ENCODE measurements at regions of chr6 and their contacts with region 1.

Region 1: GRCh38 chr6:16332175-16332542 is 93.8 kb downstream of the GMPR start:
- DNase-seq: peak; percentile 81
- H3K4me3 ChIP-seq: no peak overlapping the region; a peak in 1 of 4 replicates
- H3K27ac ChIP-seq: peak overlapping the region; percentile 51 to 75; a peak in 3 of 4 replicates
- H3K4me1 ChIP-seq: peaks cover 34 to 46% of the 10 kb centered on the region in 2 experiments
- H3K27me3 ChIP-seq: no peaks in the 10 kb centered on the region
- CTCF ChIP-seq: peak; percentile 96
- EP300 ChIP-seq: peak in 1 of 2 experiments; percentile 29; a peak in 1 of 4 replicates
- RAD21 ChIP-seq: peak; percentile 98

Region 2: GRCh38 chr6:15595461-15596173 is 736.5 kb before region 1 on chr6:
- CTCF ChIA-PET with region 1: no interaction called
- POLR2A ChIA-PET with region 1: no interaction called
- DNase-seq: no peak
- H3K4me3 ChIP-seq: no peak overlapping the region
- H3K27ac ChIP-seq: no peak overlapping the region
- H3K4me1 ChIP-seq: peaks cover 2 to 12% of the 10 kb centered on the region in 2 experiments; a peak in 2 of 4 replicates
- H3K27me3 ChIP-seq: no peaks in the 10 kb centered on the region
- CTCF ChIP-seq: no peak
- EP300 ChIP-seq: no peak
- RAD21 ChIP-seq: no peak

Region 3: GRCh38 chr6:16019462-16019861 is 312.7 kb before region 1 on chr6:
- CTCF ChIA-PET with region 1: no interaction called
- POLR2A ChIA-PET with region 1: no interaction called
- DNase-seq: no peak
- H3K4me3 ChIP-seq: no peak overlapping the region
- H3K27ac ChIP-seq: no peak overlapping the region
- H3K4me1 ChIP-seq: no peaks in the 10 kb centered on the region
- H3K27me3 ChIP-seq: no peaks in the 10 kb centered on the region
- CTCF ChIP-seq: no peak
- EP300 ChIP-seq: no peak
- RAD21 ChIP-seq: no peak

Region 4: GRCh38 chr6:16216501-16217155 is 115.5 kb before region 1 on chr6:
- CTCF ChIA-PET with region 1: no interaction called
- POLR2A ChIA-PET with region 1: no interaction called
- DNase-seq: no peak
- H3K4me3 ChIP-seq: no peak overlapping the region
- H3K27ac ChIP-seq: no peak overlapping the region
- H3K4me1 ChIP-seq: peaks cover 0 to 3% of the 10 kb centered on the region in 2 experiments; a peak in 1 of 4 replicates
- H3K27me3 ChIP-seq: no peaks in the 10 kb centered on the region
- CTCF ChIP-seq: no peak
- EP300 ChIP-seq: no peak
- RAD21 ChIP-seq: no peak

Region 5: DNA sequence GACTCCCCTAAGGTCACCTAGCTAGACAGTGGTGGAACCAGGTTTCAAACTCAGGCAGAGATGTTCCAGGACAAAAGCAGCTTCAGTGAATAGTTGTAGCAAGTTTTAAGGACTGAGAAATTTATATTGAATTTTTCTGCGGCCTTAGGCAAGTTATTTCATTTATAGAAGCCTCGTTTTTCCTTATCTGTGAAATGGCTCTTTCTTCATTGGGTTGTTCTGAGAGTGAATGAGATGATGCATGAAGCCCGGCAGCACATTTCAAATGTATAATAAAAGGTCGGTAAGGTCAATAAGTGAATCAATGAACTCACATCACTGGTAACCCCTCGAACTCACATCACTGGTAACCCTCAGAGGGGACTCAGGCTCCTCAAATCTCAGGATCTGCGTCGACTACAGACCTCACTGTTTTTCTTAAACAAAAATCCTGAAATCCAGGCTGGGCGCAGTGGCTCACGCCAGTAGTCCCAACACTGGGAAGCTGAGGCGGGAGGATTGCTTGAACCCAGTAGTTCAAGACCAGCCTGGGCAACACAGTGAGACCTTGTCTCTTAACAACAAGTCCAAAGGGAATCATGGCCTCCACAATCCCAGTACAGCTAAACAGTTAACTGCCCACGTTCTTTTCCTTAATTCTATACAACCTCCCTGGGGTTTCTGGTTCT is 94.8 kb before region 1 on chr6:
- CTCF ChIA-PET with region 1: no interaction called
- POLR2A ChIA-PET with region 1: no interaction called
- DNase-seq: no peak
- H3K4me3 ChIP-seq: no peak overlapping the region
- H3K27ac ChIP-seq: peak overlapping the region; percentile 25 to 67; a peak in 2 of 4 replicates
- H3K4me1 ChIP-seq: peaks cover 0 to 6% of the 10 kb centered on the region in 2 experiments; a peak in 1 of 4 replicates
- H3K27me3 ChIP-seq: no peaks in the 10 kb centered on the region
- CTCF ChIP-seq: no peak
- EP300 ChIP-seq: no peak
- RAD21 ChIP-seq: no peak

Region 6: GRCh38 chr6:16292942-16293341 is 39.2 kb before region 1 on chr6:
- CTCF ChIA-PET with region 1: interaction called, 10 read pairs
- POLR2A ChIA-PET with region 1: no interaction called
- DNase-seq: no peak
- H3K4me3 ChIP-seq: no peak overlapping the region
- H3K27ac ChIP-seq: no peak overlapping the region
- H3K4me1 ChIP-seq: no peaks in the 10 kb centered on the region
- H3K27me3 ChIP-seq: no peaks in the 10 kb centered on the region
- CTCF ChIP-seq: no peak
- EP300 ChIP-seq: no peak
- RAD21 ChIP-seq: no peak

Region 7: DNA sequence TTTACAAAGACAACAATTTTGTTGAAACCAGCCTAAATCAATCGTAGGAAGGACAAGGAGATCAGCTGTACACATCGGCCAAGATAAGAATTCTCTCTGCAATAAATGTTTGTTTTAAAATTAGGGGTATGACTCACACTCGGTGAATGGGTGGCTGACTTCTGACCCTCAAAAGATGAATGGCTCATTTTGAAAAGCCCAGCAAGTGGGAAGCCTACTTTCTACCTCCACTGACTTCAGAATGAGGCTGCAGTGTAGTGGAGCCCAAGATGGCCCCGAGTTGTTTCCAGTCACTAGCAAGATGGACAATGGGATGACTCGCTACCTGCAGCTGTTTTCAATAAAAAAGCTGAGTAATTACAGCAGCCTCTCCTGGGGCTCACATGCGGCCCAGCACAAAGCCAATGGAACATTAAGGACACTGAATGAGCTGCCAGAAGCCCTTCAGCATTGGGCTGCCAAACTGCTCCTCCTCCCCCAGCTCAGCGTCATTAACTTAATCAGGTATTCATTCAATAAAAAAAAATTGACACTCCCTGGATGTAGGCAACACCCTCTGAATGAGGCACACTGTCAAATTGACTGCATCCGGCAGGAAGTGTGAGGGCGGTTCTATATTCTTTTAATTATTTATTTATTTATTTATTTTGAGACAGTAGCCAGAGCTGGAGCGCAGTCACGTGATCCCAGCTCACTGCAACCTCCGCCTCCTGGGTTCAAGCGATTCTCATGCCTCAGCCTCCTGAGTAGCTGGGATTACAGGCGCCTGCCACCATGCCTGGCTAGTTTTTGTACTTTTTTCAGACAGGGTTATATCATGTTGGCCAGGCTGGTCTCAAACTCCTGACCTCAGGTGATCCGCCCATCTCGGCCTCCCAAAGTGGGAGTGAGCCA is 13.5 kb after region 1 on chr6:
- CTCF ChIA-PET with region 1: interaction called, 18 read pairs
- POLR2A ChIA-PET with region 1: interaction called, 3 read pairs
- DNase-seq: peak; percentile 78
- H3K4me3 ChIP-seq: no peak overlapping the region
- H3K27ac ChIP-seq: peak overlapping the region; percentile 78 to 93
- H3K4me1 ChIP-seq: peaks cover 17 to 19% of the 10 kb centered on the region in 2 experiments; a peak in 3 of 4 replicates
- H3K27me3 ChIP-seq: no peaks in the 10 kb centered on the region
- CTCF ChIP-seq: no peak
- EP300 ChIP-seq: peak; percentile 65 to 71; a peak in 3 of 4 replicates
- RAD21 ChIP-seq: no peak

Region 8: GRCh38 chr6:16367571-16367970 is 35.4 kb after region 1 on chr6:
- CTCF ChIA-PET with region 1: interaction called, 23 read pairs
- POLR2A ChIA-PET with region 1: interaction called, 5 read pairs
- DNase-seq: no peak
- H3K4me3 ChIP-seq: no peak overlapping the region
- H3K27ac ChIP-seq: peak overlapping the region in 1 of 2 experiments; percentile 80; a peak in 2 of 4 replicates
- H3K4me1 ChIP-seq: peaks cover 0 to 43% of the 10 kb centered on the region in 2 experiments; a peak in 2 of 4 replicates
- H3K27me3 ChIP-seq: no peaks in the 10 kb centered on the region
- CTCF ChIP-seq: no peak
- EP300 ChIP-seq: no peak
- RAD21 ChIP-seq: no peak

Region 9: GRCh38 chr6:16380220-16380809 is 48.2 kb after region 1 on chr6:
- CTCF ChIA-PET with region 1: interaction called, 27 read pairs
- POLR2A ChIA-PET with region 1: no interaction called
- DNase-seq: peak; percentile 32
- H3K4me3 ChIP-seq: no peak overlapping the region
- H3K27ac ChIP-seq: peak overlapping the region in 1 of 2 experiments; percentile 78; a peak in 2 of 4 replicates
- H3K4me1 ChIP-seq: peaks cover 0 to 22% of the 10 kb centered on the region in 2 experiments; a peak in 2 of 4 replicates
- H3K27me3 ChIP-seq: no peaks in the 10 kb centered on the region
- CTCF ChIP-seq: no peak
- EP300 ChIP-seq: peak in 1 of 2 experiments; percentile 62; a peak in 1 of 4 replicates
- RAD21 ChIP-seq: no peak; the same call in 1 of the 2 replicates

Region 10: DNA sequence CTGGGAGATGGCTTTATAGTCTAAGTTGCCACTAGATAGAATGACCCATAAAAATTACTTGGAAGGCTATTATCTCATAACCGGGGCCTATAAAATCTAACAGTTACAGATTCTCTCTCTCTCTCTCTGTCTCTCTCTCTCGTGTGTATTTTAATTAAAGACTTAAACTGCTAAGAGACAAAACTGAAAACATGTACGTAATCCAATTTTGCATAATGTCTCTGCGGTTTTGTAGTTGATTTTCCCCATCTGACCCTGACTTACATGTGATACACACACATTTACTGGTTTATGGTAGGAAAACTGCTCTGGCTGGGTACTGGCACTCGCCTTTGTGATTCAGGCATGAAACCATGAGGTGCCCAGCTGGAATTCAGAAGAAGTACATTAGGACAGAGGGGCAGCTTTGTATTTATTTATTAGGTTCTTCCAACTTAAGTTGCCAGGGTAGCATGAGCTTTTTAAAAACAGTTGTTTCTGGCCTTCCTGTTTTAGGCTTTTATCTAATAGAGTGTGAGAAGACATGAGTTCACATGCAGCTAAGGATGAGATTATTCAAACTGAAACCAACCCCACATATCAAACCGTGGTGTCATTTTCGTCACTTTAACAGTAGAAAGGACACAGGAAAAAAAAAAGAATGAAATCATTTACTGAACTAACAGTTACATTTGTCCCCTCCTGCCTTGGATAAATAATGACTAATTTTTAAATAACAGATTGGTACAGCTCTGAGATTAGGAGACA is 88.7 kb after region 1 on chr6:
- CTCF ChIA-PET with region 1: interaction called, 50 read pairs
- POLR2A ChIA-PET with region 1: no interaction called
- DNase-seq: no peak
- H3K4me3 ChIP-seq: no peak overlapping the region
- H3K27ac ChIP-seq: 0 out of 4 replicates have a peak overlapping the region, but pooled peaks of 1 of the 2 experiments have one; percentile 14
- H3K4me1 ChIP-seq: peaks cover 0 to 10% of the 10 kb centered on the region in 2 experiments; a peak in 1 of 4 replicates
- H3K27me3 ChIP-seq: no peaks in the 10 kb centered on the region
- CTCF ChIP-seq: no peak
- EP300 ChIP-seq: no peak
- RAD21 ChIP-seq: no peak

Region 11: DNA sequence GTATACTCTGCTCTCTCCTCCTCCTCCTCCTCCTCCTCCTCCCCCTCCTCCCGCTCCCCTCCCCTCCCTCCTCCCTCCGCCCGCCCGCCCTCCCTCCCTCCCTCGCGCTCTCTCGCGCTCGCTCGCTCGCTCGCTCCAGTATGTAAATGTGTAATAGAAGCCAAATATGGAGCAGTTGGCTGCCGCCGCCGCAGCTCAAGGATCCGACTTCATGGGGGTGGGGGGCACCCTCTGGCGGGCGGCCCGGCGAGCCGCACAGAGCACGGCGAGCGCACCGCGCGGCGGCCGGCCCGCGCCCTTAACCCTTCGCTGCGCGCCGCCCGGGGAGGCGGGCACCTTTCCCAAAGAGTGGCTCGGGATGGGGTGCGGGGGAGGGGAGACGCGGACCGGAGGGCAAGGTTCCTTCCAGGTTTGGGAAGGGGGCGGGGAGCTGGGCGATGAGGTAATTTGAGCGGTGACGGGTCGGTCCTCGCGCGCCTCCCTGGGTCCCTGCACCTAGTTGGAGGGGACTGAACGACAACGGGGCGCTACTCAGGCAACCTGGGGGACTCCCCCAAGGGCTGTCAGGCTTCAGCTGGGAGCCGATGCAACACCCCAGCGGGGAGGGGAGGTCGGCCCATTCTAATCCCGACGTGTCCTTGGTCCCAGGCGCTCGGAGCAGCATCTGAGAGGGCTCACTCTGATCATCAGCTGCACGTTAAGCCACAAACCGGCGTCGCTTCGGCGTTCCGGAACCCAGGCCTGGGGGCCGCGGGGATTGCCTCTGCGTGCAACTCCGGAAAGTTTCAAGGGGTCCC is 429.5 kb after region 1 on chr6:
- CTCF ChIA-PET with region 1: interaction called, 24 read pairs
- POLR2A ChIA-PET with region 1: no interaction called
- DNase-seq: peak; percentile 79
- H3K4me3 ChIP-seq: peak overlapping the region; percentile 58 to 81
- H3K27ac ChIP-seq: peak overlapping the region; percentile 77 to 90
- H3K4me1 ChIP-seq: peaks cover 12 to 28% of the 10 kb centered on the region in 2 experiments; a peak in 3 of 4 replicates
- H3K27me3 ChIP-seq: no peaks in the 10 kb centered on the region
- CTCF ChIP-seq: peak; percentile 51
- EP300 ChIP-seq: peak in 1 of 2 experiments; percentile 49; a peak in 1 of 4 replicates
- RAD21 ChIP-seq: peak; percentile 24; the same call in 1 of the 2 replicates